ENCODE measurements at regions of chr6 and their contacts with region 1.

Region 1: DNA sequence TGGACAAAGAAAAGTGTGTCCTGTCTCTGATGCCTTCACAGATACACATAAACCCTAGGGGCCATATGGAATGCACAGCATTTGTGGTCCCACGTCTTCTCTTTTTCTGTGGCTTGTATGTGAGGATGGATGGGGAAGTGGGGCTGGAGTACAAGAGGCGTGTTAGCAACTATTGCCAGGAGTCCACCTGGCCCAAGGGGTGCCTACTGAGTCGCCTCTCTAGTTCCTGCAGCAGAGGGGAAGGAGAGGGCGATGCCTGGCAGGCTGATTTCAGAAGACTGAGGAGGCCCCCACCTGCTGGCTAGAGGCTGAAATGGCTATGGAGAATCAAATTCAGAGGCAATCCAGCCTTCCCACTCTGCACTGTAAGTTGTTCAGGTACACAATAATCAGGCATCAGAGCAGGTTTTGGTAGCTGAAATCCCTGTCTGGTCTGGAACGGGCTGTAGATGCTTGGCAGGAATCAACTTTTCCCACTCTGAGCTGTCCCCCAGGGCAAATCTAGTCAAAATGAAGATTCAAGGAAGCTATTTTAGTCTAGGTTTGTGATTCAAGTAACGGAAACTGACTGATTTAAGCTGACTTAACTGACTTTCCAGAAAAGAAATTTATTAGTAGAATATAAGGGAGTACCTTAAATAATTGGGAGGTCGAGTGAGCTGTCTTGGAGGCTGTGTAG is 14.9 kb upstream of the PPARD start:
- DNase-seq: peak in 8 of 9 donors; percentile 64 to 81 (median 76)
- ATAC-seq: peak; percentile 86
- H3K4me3 ChIP-seq: no peak overlapping the region
- H3K4me3 Mint-ChIP-seq: peak overlapping the region in 9 of 10 donors; percentile 1 to 70 (median 36)
- H3K27ac ChIP-seq: peak overlapping the region; percentile 34
- H3K27ac Mint-ChIP-seq: peak overlapping the region; percentile 65 to 96 (median 86)
- H3K4me1 ChIP-seq: peaks cover 11 to 16% of the 10 kb centered on the region in 2 donors
- H3K4me1 Mint-ChIP-seq: peaks cover 15 to 29% (median 23%) of the 10 kb centered on the region in 7 donors
- H3K27me3 ChIP-seq: no peaks in the 10 kb centered on the region
- H3K27me3 Mint-ChIP-seq: no peaks in the 10 kb centered on the region

Region 2: GRCh38 chr6:35305117-35305516 is 22.4 kb before region 1 on chr6:
- CTCF ChIA-PET with region 1: interaction called, 346 read pairs
- POLR2A ChIA-PET with region 1: interaction called, 318 read pairs
- intact Hi-C with region 1: loop called (anchors 1 kb)
- DNase-seq: peak in 3 of 9 donors; percentile 24 to 30 (median 24)
- ATAC-seq: no peak
- H3K4me3 ChIP-seq: no peak overlapping the region
- H3K4me3 Mint-ChIP-seq: peak overlapping the region in 7 of 10 donors; percentile 25 to 100 (median 56)
- H3K27ac ChIP-seq: peak overlapping the region; percentile 91
- H3K27ac Mint-ChIP-seq: peak overlapping the region in 5 of 9 donors; percentile 76 to 99 (median 93)
- H3K4me1 ChIP-seq: peaks cover 68 to 70% of the 10 kb centered on the region in 2 donors
- H3K4me1 Mint-ChIP-seq: peaks cover 59 to 91% (median 77%) of the 10 kb centered on the region in 7 donors
- H3K27me3 ChIP-seq: no peaks in the 10 kb centered on the region
- H3K27me3 Mint-ChIP-seq: no peaks in the 10 kb centered on the region

Region 3: DNA sequence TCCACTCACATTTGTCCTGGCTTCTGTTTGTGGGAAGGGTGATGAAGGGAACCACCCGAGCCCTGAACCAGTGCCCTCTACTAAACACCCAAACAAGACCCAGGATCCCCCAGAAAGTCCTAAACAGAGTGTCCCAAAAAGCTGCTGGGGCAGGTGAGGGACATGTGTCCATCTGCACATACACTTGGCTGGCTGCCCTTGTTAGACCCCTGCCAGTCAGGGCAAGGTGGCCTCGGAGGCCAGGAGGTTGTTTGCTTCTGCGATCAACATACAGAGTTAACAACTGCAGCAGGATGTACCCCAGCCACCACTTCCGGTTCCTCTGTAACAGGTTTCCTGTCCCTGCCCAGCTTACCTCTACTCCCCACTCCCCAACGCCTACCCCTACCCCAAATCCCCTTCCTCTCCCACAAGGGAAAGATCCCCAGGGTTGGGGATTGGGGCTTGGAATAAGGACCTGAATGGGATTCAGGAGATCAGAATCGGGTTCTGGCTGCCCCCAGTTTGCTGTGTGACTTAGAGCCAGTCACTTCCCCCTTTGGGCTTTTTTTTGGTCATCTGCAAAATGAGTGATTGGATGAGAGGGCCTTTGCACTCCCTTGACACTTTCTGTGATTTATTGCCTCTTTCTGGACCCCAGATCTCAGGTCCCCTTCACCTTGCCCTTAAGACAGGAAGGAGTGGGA is 16.0 kb before region 1 on chr6:
- CTCF ChIA-PET with region 1: interaction called, 46 read pairs
- POLR2A ChIA-PET with region 1: interaction called, 250 read pairs
- intact Hi-C with region 1: loop called (anchors 1 to 2 kb)
- DNase-seq: peak in 8 of 9 donors; percentile 50 to 80 (median 73)
- ATAC-seq: peak; percentile 85
- H3K4me3 ChIP-seq: peak overlapping the region; percentile 46
- H3K4me3 Mint-ChIP-seq: peak overlapping the region; percentile 79 to 89 (median 86)
- H3K27ac ChIP-seq: peak overlapping the region; percentile 84
- H3K27ac Mint-ChIP-seq: peak overlapping the region; percentile 93 to 100 (median 99)
- H3K4me1 ChIP-seq: peaks cover 63 to 81% of the 10 kb centered on the region in 2 donors
- H3K4me1 Mint-ChIP-seq: peaks cover 69 to 98% (median 94%) of the 10 kb centered on the region in 7 donors
- H3K27me3 ChIP-seq: no peaks in the 10 kb centered on the region
- H3K27me3 Mint-ChIP-seq: no peaks in the 10 kb centered on the region